BJ (cell line): ENCODE measurements at regions of chr10 and their contacts with region 1.

Region 1: GRCh38 chr10:14653271-14654228 is 121.1 kb downstream of the FAM107B start:
- DNase-seq: peak; percentile 74
- H3K4me3 ChIP-seq: no peak overlapping the region
- H3K27me3 ChIP-seq: no peaks in the 10 kb centered on the region
- CTCF ChIP-seq: no peak

Region 2: GRCh38 chr10:14625192-14625631 is 28.3 kb before region 1 on chr10:
- CTCF ChIA-PET with region 1: no interaction called
- POLR2A ChIA-PET with region 1: interaction called, 15 read pairs
- DNase-seq: no peak
- H3K4me3 ChIP-seq: no peak overlapping the region
- H3K27me3 ChIP-seq: no peaks in the 10 kb centered on the region
- CTCF ChIP-seq: no peak

Region 3: DNA sequence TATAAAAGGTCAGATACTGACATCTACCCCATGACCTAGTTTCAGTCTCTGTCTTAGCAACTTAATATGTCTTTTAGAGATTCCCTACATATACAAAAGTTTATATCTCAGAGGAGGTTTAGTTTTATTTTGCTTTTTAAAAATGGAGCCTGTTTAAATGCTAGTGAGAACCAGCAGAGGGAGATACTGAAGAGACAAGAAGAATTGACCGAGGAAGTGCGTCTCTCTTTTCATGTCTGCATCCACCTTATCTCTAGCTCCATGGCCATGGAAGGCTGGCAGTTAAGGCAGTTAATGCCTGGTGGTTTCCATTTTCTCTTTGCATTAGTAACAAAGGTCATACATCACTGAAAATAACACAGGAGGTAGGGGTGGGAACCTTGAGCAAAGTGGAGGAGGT is 235.8 kb after region 1 on chr10:
- CTCF ChIA-PET with region 1: no interaction called
- POLR2A ChIA-PET with region 1: no interaction called
- DNase-seq: no peak
- H3K4me3 ChIP-seq: no peak overlapping the region
- H3K27me3 ChIP-seq: no peaks in the 10 kb centered on the region
- CTCF ChIP-seq: 0 out of 2 replicates have a peak, but pooled peaks have one; percentile 20